ENCODE measurements at regions of chr12 and their contacts with region 1.

Region 1: DNA sequence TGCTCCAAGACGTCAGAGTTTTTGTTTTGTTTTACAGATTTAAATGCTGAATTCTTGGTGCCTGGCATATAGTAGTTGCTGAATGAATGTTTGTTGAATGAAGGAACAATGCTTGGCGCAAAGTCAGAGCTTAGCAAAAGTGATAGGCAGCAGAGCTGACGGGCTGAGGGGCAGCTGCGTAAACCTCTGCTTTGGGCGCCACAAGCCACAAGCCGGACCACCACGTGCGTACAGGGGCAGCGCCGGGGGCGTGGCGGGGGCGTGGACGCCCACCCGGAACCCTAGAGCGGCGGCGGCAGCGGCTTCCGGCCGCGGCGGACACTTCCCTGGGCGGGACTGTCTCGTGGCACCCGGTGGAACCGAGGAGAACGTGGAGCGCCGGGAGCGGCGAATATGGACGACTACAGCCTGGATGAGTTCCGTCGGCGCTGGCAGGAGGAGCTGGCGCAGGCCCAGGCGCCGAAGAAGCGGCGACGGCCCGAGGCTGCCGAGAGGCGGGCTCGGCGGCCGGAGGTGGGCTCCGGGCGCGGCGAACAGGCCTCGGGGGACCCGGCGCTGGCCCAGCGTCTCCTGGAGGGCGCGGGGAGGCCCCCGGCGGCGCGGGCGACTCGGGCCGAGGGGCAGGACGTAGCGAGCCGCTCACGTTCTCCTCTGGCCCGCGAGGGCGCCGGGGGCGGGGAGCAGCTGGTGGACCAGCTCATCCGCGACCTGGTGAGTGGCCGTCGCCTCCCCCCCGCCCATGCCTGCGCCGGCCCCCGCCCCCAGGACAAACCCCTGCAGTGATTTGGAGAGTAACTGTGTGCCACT is at the start of gene FBXW8:
- DNase-seq: peak; percentile 72
- ATAC-seq: peak; percentile 96
- H3K4me3 Mint-ChIP-seq: peak within 1 kb of the TSS; percentile 85
- H3K27ac Mint-ChIP-seq: peak within 1 kb of the TSS; percentile 65
- H3K4me1 Mint-ChIP-seq: peaks cover 33% of the 10 kb centered on the region
- H3K27me3 Mint-ChIP-seq: no peaks in the 10 kb centered on the region
- CTCF ChIP-seq: no peak
- total RNA-seq, gene FBXW8: 16.1 and 17.6 TPM in 2 replicates

Region 2: DNA sequence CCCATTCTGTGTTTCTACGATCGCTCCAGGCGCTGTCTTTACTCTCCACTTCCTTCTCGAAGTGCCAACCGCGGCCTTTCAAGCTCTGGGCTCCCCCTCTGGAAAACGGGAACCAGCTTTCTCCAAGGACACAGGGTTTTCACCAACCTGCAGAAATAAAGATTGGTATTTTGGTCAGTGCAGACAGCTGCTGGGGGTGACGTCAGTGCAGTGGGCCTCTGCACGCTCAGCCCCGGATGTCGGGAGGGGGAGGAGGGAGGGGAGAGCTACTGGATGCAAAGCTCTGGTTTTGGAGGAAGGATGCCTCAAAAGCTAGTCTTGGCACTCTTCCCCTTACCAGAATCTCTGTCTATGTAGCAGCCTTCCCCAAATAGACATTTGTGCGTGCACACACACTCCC is 49.5 kb before region 1 on chr12:
- CTCF ChIA-PET with region 1: no interaction called
- POLR2A ChIA-PET with region 1: no interaction called
- intact Hi-C with region 1: loop called (anchors 2 kb)
- DNase-seq: peak; percentile 44
- ATAC-seq: peak; percentile 72
- H3K4me3 Mint-ChIP-seq: peak overlapping the region; percentile 47
- H3K27ac Mint-ChIP-seq: peak overlapping the region; percentile 81
- H3K4me1 Mint-ChIP-seq: peaks cover 74% of the 10 kb centered on the region
- H3K27me3 Mint-ChIP-seq: no peaks in the 10 kb centered on the region
- CTCF ChIP-seq: no peak

Region 3: DNA sequence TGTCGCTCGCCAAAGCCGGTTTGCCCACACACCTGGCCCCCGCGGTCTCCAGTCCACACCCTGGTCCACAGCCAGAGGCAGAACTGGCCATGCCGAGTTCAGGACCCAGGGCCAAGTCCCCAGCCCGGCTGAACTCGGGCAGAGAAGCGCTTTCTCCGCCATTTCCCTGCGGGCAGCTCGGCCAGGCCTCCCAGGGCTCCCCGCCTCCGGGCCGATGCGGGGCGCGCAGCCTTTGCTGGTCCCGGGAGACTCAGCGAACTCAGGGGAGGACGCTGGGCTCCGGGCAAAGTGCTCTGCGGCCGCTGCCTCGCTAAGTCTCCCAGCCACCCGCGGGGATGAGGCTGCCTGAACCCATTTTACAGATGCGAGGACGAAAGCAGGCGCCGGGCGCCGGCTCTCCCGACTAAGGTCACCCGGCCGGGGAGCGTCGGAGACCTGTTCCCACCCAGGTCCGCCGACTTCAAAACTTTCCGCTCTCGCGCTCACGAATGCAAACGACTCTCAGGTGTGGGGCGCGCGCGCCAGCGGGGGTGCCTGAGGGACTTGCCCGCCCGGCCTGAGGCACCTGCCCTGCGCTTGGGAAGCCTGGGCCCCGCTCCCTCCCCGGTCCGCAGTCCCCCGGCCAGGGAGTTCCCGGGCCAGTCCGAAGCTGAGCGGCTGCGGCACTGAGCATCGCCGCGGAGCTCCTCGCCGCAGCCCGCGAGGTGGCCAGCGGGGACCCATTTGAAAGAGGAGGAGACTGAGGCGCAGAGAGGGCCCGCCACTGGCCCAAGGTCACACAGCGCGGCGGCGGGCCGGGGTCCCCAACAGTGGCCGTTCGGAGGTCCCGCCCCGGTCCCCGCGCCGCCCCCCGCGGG is 187.7 kb after region 1 on chr12:
- CTCF ChIA-PET with region 1: no interaction called
- POLR2A ChIA-PET with region 1: interaction called, 3 read pairs
- intact Hi-C with region 1: loop called (anchors 5 kb)
- DNase-seq: peak; percentile 29
- ATAC-seq: peak; percentile 45
- H3K4me3 Mint-ChIP-seq: peak overlapping the region; percentile 79
- H3K27ac Mint-ChIP-seq: no peak overlapping the region
- H3K4me1 Mint-ChIP-seq: peaks cover 20% of the 10 kb centered on the region
- H3K27me3 Mint-ChIP-seq: peaks cover 14% of the 10 kb centered on the region
- CTCF ChIP-seq: no peak

Region 4: DNA sequence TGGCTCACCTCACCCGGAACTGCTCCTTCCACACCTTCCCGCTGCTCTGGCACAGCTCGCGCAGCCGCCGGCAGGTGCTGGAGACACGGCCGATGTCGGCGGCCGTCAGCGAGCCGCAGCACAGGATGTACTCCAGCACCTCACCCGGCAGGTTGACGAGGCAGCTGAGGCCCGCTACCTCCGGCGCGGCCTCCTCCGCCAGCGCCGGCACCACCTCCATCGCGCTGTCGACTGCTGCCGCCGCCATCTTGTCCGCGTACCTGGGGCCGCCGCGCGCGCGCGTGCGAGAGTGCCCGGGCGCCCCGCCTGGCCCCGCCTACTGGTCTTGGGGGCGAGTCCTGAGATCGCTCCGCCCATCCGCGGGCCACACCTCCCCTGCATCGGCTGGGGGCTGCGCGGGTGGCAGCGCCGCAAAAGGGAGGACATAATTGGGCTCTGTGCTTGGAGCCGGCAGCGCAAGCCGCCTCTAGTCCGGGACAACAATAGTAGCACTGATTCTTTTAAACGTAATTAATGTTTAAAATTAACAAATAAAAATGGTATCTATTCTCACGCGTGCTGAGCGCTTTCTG is 279.4 kb after region 1 on chr12 and contains the start of gene FBXO21:
- CTCF ChIA-PET with region 1: no interaction called
- POLR2A ChIA-PET with region 1: no interaction called
- intact Hi-C with region 1: loop called (anchors 1 kb)
- DNase-seq: peak; percentile 96
- ATAC-seq: peak; percentile 96
- H3K4me3 Mint-ChIP-seq: peak within 1 kb of the TSS; percentile 93
- H3K27ac Mint-ChIP-seq: peak within 1 kb of the TSS; percentile 90
- H3K4me1 Mint-ChIP-seq: peaks cover 29% of the 10 kb centered on the region
- H3K27me3 Mint-ChIP-seq: no peaks in the 10 kb centered on the region
- CTCF ChIP-seq: no peak
- total RNA-seq, gene FBXO21: 35.9 and 41.5 TPM in 2 replicates

Region 5: GRCh38 chr12:117279606-117280005 is 368.8 kb after region 1 on chr12:
- CTCF ChIA-PET with region 1: no interaction called
- POLR2A ChIA-PET with region 1: no interaction called
- intact Hi-C with region 1: no loop called
- DNase-seq: no peak
- ATAC-seq: no peak
- H3K4me3 Mint-ChIP-seq: no peak overlapping the region
- H3K27ac Mint-ChIP-seq: no peak overlapping the region
- H3K4me1 Mint-ChIP-seq: peaks cover 5% of the 10 kb centered on the region
- H3K27me3 Mint-ChIP-seq: peaks cover 12% of the 10 kb centered on the region
- CTCF ChIP-seq: no peak